Heart right ventricle (tissue), 16 donors: ENCODE measurements at regions of chr16 and their contacts with region 1.

Region 1: DNA sequence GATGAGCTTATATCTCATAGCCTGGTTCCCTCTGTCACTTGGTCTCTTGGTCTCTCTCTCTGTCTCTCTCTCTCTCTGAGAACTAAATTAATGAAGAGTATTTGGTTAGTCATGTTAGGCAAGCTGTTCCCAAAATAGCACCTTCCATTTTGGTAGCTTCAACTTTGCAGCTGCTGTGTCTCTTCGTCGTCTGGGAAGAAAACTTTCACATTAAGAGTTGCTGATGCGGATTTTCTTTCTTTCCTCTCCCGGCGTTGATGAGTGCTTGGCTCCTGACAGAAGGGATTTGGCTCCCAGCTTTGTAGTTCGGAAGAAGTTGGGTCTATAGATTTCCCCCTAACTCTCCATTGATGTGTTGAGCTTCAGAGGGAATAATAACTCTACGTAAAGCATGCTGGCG is at the start of gene RBFOX1:
- DNase-seq: no peak
- ATAC-seq: peak in 7 of 8 donors; percentile 39 to 73 (median 69)
- H3K4me3 ChIP-seq: peak within 1 kb of the TSS; percentile 5 to 58 (median 44)
- H3K27ac ChIP-seq: peak within 1 kb of the TSS; percentile 47 to 91 (median 82)
- H3K4me1 ChIP-seq: peaks cover 0 to 32% (median 3%) of the 10 kb centered on the region in 9 donors
- H3K27me3 ChIP-seq: no peaks in the 10 kb centered on the region
- CTCF ChIP-seq: no peak
- total RNA-seq, gene RBFOX1: 42.1 to 82.9 (median 55.3) TPM

Region 2: DNA sequence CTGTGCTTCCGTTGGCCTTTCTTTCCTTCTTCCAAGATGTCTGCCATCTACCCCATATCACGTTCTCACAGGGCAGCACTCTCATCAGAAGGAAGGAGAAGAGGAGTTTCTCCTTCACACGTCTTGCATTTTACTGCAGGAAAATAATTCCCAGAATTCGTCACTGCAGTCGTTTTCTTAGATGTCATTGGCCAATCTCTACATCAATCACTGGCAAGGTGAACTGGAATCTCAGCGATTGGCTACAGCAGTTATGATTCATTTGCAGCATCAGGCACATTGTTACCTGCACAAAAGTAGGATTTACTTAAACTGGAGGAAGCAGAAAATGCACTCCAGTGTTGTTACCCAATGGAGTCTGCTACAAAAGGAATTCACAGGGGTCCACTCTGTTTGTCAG is 277.2 kb before region 1 on chr16:
- intact Hi-C with region 1: no loop called
- DNase-seq: no peak
- ATAC-seq: no peak
- H3K4me3 ChIP-seq: no peak overlapping the region
- H3K27ac ChIP-seq: no peak overlapping the region
- H3K4me1 ChIP-seq: no peaks in the 10 kb centered on the region
- H3K27me3 ChIP-seq: peaks cover 0 to 9% (median 0%) of the 10 kb centered on the region in 7 donors
- CTCF ChIP-seq: no peak

Region 3: DNA sequence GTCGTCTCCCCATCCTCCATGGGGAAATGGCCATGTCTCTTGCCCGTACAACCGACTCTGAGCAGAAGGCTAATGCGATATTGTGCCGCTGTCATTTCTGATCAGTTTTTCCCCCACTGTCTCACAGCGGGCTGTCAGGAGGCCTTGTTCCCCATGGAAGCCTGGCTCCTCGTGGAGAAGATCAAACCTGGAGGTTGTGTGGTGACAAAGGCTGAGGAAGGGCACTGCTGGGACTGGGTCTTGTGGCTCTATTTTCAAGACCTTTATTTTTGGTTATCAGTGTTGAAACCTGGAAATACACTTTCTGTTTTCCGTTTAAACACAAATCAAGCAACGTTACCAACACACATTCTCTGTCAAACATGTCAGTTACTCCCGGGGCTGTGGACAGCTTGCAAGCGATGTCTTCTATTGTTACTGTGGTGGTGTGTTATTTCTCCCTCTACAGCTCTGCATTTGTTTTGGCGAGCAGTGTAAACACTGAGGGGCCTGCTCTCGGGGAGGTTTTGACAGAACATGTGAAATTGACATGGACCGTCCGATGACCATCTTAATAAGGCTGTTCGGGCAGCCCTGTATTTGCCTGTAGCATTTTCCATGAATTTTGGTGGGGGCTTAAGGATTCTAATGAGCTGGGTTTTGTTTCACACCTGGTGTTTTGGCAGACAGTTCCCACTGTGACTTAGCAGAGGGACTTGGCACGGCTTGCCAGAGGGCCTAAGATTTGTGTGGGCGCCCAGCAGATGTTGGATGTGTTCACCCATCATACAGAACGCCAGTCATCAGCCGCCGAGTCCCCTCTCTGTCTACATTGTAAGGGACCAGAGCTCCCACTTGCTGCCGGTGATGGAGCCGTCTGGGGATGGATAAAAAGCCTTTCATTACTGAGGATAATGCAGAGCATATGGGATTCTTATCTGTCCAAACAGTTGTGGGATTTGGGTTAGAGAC is 12.5 kb after region 1 on chr16:
- intact Hi-C with region 1: loop called in 2 of 10 experiments (anchors 1 to 2 kb)
- DNase-seq: peak; percentile 35 to 50
- ATAC-seq: peak; percentile 79 to 96 (median 88)
- H3K4me3 ChIP-seq: peak overlapping the region in 1 of 10 donors; percentile 23
- H3K27ac ChIP-seq: peak overlapping the region; percentile 50 to 85 (median 70)
- H3K4me1 ChIP-seq: peaks cover 0 to 34% (median 9%) of the 10 kb centered on the region in 9 donors
- H3K27me3 ChIP-seq: no peaks in the 10 kb centered on the region
- CTCF ChIP-seq: peak in 1 of 9 donors; percentile 10

Region 4: GRCh38 chr16:7363422-7364417 is 31.1 kb after region 1 on chr16:
- intact Hi-C with region 1: loop called in 1 of 10 experiments (anchors 1 kb)
- DNase-seq: peak; percentile 44 to 48
- ATAC-seq: peak; percentile 36 to 75 (median 64)
- H3K4me3 ChIP-seq: no peak overlapping the region
- H3K27ac ChIP-seq: peak overlapping the region; percentile 32 to 72 (median 54)
- H3K4me1 ChIP-seq: peaks cover 0 to 48% (median 13%) of the 10 kb centered on the region in 9 donors
- H3K27me3 ChIP-seq: no peaks in the 10 kb centered on the region
- CTCF ChIP-seq: no peak

Region 5: GRCh38 chr16:7372095-7372494 is 39.5 kb after region 1 on chr16:
- intact Hi-C with region 1: loop called in 1 of 10 experiments (anchors 5 kb)
- DNase-seq: no peak
- ATAC-seq: peak in 7 of 8 donors; percentile 46 to 91 (median 63)
- H3K4me3 ChIP-seq: no peak overlapping the region
- H3K27ac ChIP-seq: peak overlapping the region in 2 of 10 donors; percentile 12 to 17
- H3K4me1 ChIP-seq: peaks cover 0 to 40% (median 10%) of the 10 kb centered on the region in 9 donors
- H3K27me3 ChIP-seq: no peaks in the 10 kb centered on the region
- CTCF ChIP-seq: no peak

Region 6: GRCh38 chr16:7382521-7382920 is 49.9 kb after region 1 on chr16:
- intact Hi-C with region 1: no loop called
- DNase-seq: no peak
- ATAC-seq: no peak
- H3K4me3 ChIP-seq: no peak overlapping the region
- H3K27ac ChIP-seq: no peak overlapping the region
- H3K4me1 ChIP-seq: peaks cover 0 to 33% (median 9%) of the 10 kb centered on the region in 9 donors
- H3K27me3 ChIP-seq: no peaks in the 10 kb centered on the region
- CTCF ChIP-seq: no peak